Activated CD4-positive, alpha-beta T cell treated with anti-CD3 and anti-CD28 coated beads for 36 hours (primary cell): ENCODE measurements at regions of chr1 and their contacts with region 1.

Region 1: DNA sequence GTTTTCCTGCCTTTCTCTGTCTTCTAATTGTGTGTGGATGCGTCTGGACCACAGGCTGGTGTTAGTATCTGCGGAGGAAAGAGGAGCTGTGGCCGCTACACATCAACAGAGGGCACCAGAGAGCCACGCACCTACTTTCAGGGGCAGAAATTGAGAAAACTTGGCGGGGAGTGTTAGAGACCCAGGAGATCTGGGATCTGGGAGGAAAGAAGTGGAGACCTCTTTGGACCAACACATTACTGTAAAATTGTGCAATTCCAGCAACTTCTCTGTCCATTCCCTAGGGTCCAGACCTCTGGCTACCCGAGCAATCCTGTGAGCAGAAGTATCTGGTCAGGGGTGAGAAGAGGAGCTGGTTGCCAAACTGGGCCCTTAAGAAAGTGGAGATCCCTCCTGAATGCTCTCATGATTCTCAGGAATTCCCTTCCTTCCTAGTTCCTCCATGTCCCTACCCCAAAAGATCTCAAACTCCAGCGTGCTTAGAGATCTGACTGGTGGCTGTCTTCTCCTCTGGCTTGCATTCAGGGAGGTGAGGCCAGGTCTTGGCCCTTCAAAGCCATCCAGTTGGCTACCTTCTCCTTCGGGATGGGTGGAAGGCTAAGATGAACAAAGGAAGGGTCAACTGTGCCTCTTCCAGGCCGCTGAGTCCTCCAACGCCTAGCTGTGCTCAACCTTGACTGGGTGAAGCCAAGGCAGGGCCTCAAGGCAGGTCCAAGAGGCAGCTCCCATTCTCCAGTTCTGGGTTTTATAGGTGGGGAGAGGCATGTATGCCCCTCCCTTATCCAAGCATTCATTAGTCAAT is 1.2 kb upstream of the KIRREL1 start:
- DNase-seq: peak; percentile 73
- ATAC-seq: peak; percentile 72
- H3K4me3 Mint-ChIP-seq: no peak overlapping the region
- H3K27ac Mint-ChIP-seq: no peak overlapping the region
- H3K4me1 Mint-ChIP-seq: peaks cover 6% of the 10 kb centered on the region
- H3K27me3 Mint-ChIP-seq: peaks cover 39% of the 10 kb centered on the region

Region 2: DNA sequence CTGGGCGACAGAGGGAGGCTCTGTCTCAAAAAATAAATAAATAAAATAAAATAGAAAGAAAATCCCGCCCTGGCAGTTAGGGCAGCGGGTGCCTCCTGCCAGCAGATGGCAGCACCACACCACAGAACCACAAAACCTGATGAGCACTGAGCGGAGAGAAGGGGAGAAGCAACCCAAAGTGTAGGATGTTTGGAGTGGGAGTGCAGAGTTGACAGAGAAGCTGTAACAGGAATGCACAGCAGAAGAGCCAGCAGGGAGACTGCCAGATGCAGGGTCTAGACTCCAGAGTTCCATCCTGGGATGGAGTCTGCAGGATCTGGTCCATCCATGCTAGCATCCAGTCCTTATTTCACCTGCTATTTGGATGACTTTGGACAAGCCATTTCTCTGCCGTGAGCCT is 28.5 kb before region 1 on chr1:
- CTCF ChIA-PET with region 1: interaction called, 27 read pairs
- POLR2A ChIA-PET with region 1: no interaction called
- intact Hi-C with region 1: no loop called
- DNase-seq: peak; percentile 80
- ATAC-seq: peak; percentile 67
- H3K4me3 Mint-ChIP-seq: no peak overlapping the region
- H3K27ac Mint-ChIP-seq: no peak overlapping the region
- H3K4me1 Mint-ChIP-seq: peaks cover 5% of the 10 kb centered on the region
- H3K27me3 Mint-ChIP-seq: peaks cover 12% of the 10 kb centered on the region

Region 3: DNA sequence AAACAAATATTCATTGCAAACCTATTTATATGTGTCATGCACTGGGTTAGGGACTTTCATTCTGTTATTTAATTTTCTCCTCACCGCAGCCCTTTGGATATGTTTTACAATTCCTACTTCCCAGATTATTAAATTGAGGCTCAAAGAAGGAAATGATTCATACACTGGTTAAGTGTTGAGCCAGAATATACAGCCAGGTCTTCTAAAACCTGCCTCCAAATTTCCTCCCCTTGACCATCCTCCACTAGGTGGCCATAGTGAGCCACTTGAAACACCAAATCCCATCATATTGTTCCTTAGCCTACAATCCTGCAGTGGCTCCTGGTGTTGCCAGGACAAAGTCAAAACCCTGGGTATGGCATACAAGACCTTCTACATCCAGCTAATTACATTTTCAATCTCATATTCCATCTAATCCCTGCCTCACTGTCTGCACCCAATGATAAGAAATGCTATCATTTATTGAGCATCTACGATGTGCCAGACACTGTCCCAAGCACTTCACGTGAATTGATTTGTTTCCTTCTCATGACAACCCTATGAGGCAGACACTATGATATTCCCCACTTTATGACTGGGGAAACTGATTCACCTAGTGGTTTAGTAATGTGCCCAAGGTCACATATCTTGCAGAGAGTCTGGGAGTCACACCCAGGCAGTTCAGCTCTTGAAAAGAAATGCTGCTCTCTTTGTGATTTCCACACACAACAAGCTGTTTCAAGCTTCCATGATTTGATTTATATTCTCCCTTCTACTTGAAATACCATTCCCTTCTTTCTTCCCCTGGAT is 22.3 kb before region 1 on chr1:
- CTCF ChIA-PET with region 1: interaction called, 27 read pairs
- POLR2A ChIA-PET with region 1: no interaction called
- intact Hi-C with region 1: no loop called
- DNase-seq: peak; percentile 20
- ATAC-seq: no peak
- H3K4me3 Mint-ChIP-seq: no peak overlapping the region
- H3K27ac Mint-ChIP-seq: no peak overlapping the region
- H3K4me1 Mint-ChIP-seq: no peaks in the 10 kb centered on the region
- H3K27me3 Mint-ChIP-seq: peaks cover 4% of the 10 kb centered on the region

Region 4: GRCh38 chr1:158035976-158036583 is 43.8 kb after region 1 on chr1:
- CTCF ChIA-PET with region 1: interaction called, 23 read pairs
- POLR2A ChIA-PET with region 1: no interaction called
- intact Hi-C with region 1: loop called (anchors 1 kb)
- DNase-seq: peak; percentile 44
- ATAC-seq: no peak
- H3K4me3 Mint-ChIP-seq: no peak overlapping the region
- H3K27ac Mint-ChIP-seq: no peak overlapping the region
- H3K4me1 Mint-ChIP-seq: no peaks in the 10 kb centered on the region
- H3K27me3 Mint-ChIP-seq: peaks cover 2% of the 10 kb centered on the region

Region 5: DNA sequence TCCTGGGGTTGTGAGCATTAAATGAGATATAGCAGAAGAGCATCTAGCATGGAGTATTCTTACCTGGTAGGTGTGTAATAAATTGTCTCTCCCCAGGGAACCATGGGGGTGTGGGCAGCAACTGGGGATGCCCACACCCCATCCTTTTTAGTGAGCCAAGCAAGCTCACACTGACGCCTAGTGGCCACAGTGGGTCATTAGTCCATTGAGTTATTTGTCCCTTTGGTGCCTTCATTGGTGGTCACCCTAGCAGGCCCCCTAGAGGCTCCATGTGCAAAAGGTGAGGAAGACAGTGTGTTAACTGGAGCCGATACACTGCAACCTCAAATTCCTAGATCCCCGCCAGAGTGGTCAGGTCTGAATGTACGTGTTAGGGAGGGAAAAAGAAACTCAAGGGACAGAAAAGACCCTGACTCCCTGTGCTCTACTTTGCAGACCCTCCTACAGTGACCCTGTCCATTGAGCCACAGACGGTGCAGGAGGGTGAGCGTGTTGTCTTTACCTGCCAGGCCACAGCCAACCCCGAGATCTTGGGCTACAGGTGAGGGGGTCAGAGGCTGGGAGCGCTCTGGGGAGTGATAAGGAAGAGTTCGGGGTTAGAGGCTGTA is 95.2 kb after region 1 on chr1:
- CTCF ChIA-PET with region 1: interaction called, 4 read pairs
- POLR2A ChIA-PET with region 1: no interaction called
- intact Hi-C with region 1: loop called in 1 of 2 experiments (anchors 1 kb)
- DNase-seq: peak; percentile 55
- ATAC-seq: peak; percentile 61
- H3K4me3 Mint-ChIP-seq: no peak overlapping the region
- H3K27ac Mint-ChIP-seq: no peak overlapping the region
- H3K4me1 Mint-ChIP-seq: no peaks in the 10 kb centered on the region
- H3K27me3 Mint-ChIP-seq: no peaks in the 10 kb centered on the region

Region 6: GRCh38 chr1:158117854-158118704 is 125.8 kb after region 1 on chr1:
- CTCF ChIA-PET with region 1: interaction called, 130 read pairs
- POLR2A ChIA-PET with region 1: interaction called, 3 read pairs
- intact Hi-C with region 1: loop called (anchors 1 kb)
- DNase-seq: peak; percentile 71
- ATAC-seq: peak; percentile 84
- H3K4me3 Mint-ChIP-seq: peak overlapping the region; percentile 42
- H3K27ac Mint-ChIP-seq: no peak overlapping the region
- H3K4me1 Mint-ChIP-seq: peaks cover 10% of the 10 kb centered on the region
- H3K27me3 Mint-ChIP-seq: peaks cover 41% of the 10 kb centered on the region

Region 7: DNA sequence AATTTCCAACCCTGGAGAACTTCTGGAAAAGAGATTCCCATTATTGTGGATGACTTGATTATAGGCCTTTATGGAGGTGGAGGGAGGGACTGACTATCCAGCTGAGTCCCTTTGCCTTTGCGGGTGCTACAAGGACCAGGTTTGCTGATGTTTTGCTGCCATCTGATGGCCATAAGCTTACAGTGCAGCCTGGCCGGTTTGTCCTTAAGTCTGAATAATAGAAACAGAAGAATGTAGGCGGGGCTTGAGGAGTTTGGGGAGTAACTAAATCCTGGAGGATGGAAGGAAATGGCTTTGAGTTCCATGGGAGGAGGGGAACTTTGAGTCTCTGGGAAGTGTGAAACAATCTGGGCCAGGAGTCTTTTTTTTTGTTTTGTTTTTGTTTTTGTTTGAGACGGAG is 132.8 kb after region 1 on chr1:
- CTCF ChIA-PET with region 1: interaction called, 130 read pairs
- POLR2A ChIA-PET with region 1: interaction called, 4 read pairs
- intact Hi-C with region 1: loop called (anchors 1 kb)
- DNase-seq: peak; percentile 82
- ATAC-seq: peak; percentile 95
- H3K4me3 Mint-ChIP-seq: no peak overlapping the region
- H3K27ac Mint-ChIP-seq: no peak overlapping the region
- H3K4me1 Mint-ChIP-seq: no peaks in the 10 kb centered on the region
- H3K27me3 Mint-ChIP-seq: peaks cover 16% of the 10 kb centered on the region